Lower leg skin (tissue), 4 donors: ENCODE measurements at regions of chr4 and their contacts with region 1.

Region 1: DNA sequence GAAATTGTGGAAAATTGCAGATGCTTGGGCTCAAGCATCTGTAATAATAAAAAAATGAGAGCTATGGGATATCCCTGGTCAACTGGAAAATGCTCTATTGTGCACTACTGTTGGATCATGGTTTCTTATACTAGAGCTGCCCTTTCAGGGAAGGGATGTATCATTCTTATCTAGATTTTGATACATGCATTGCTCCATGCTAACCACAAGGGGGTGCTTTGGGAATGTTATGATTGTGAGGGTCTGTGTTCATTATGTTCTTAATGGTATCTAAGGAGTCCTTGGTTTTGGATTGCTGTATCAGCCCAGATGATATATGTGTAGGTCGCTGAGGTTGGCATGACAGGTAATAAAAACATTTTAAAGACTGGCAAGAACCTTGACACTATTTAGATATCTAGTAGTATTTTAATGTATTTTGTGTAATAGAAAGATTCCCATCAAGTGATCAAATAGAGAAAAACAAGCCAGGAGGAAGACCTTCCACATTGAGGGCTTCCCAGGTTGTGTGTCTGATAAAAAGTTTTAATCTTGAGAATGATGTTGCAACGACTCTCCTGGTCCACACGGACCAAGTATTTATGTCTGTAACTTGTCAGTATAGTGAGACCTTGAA is 49.2 kb upstream of the TLR2 start:
- DNase-seq: no peak
- H3K4me3 ChIP-seq: no peak overlapping the region
- CTCF ChIP-seq: no peak
- POLR2A ChIP-seq: no peak

Region 2: GRCh38 chr4:153750197-153750817 is 115.5 kb after region 1 on chr4:
- intact Hi-C with region 1: loop called (anchors 10 kb)
- DNase-seq: peak in 1 of 2 donors; percentile 43
- H3K4me3 ChIP-seq: no peak overlapping the region
- CTCF ChIP-seq: no peak
- POLR2A ChIP-seq: no peak

Region 3: GRCh38 chr4:155207534-155208257 is 1572.8 kb after region 1 on chr4:
- intact Hi-C with region 1: no loop called
- DNase-seq: no peak
- H3K4me3 ChIP-seq: no peak overlapping the region
- CTCF ChIP-seq: no peak
- POLR2A ChIP-seq: no peak